Ascending aorta (tissue), 2 donors: ENCODE measurements at regions of chr1 and their contacts with region 1.

Region 1: DNA sequence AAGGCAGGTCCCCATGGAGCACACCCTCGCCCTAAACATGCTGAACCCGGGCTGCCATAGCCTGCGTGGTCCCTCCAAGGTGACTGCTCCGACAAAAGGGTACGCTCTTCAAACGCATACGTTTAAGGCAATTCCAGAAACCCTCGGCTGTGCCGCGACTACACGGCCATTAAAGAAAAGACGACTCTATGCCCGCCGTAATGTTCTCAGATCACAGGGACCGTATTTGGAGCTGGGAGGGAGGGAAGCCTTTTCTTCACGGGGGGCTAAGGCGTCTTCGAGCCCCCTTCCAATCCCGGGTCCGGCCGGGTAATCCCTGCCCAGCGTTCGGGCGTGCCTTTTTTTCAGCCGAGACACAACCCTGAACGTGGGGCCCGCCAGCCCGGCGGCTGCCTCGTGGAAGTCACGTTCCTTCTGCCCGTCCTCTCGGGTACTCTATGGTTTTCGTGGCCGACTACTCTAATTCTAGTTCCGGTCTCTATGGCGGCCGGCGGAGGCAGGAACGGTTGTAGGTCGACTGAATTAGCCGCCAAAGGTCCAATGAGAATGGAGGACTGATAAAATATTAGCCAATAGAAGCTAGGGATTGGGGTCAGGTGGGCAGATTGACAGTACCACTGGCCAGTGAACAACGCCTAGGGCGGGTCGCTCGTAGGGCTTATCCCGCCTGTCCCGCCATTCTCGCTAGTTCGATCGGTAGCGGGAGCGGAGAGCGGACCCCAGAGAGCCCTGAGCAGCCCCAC is at the start of gene YBX1:
- DNase-seq: peak; percentile 93 to 98
- H3K4me3 ChIP-seq: peak within 1 kb of the TSS; percentile 96
- H3K27ac ChIP-seq: peak within 1 kb of the TSS; percentile 84 to 95
- H3K4me1 ChIP-seq: peaks cover 9 to 40% of the 10 kb centered on the region in 2 donors
- H3K27me3 ChIP-seq: no peaks in the 10 kb centered on the region
- CTCF ChIP-seq: no peak
- total RNA-seq, gene YBX1: 356 TPM

Region 2: DNA sequence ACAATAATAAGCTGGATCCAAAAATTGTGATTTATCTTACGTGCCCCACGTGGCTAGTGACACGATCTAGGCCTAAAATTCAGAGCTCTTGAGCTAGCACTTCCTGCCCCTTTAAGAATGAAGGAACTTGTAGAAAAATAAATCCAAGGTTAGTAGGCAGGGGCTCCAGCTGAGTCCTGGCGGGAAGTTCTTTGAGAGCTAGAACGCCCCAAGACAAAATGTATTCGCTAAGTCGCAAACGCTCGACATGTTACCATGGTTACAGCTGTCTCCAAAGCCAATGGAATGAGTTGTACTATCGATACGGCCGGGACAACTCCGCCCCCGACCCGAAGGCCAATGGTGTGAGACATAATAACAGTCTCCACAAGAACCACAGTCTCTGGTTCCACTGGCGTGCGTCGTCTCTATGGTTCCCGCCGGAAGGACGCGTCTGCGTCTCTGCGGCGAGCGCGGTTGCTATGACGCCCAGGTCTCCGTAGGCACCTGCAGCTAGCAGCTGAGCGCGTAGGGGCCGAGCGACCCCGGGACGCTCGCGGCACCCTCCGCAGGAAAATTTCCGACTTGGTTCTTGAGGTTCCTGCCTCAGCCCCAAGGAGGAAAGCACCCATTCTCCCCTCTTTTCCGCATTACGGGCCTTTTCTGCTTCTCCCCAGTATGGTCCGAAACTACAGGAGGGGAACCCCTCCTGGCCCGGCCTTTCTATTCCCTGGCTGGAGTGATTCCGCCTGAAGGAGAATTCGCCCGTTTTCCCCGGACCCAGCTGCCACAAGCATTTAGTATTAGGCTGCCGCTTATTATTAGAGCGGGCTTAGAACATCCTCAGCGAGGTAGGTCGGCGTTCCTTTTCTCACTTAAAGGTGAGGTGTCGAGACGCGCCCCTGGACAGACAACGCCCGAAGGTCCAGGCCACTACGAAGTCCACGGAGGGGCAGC is 218.8 kb before region 1 on chr1 and contains the start of gene CCDC30:
- intact Hi-C with region 1: loop called (anchors 2 kb)
- DNase-seq: peak; percentile 94 to 98
- H3K4me3 ChIP-seq: peak within 1 kb of the TSS; percentile 77
- H3K27ac ChIP-seq: peak within 1 kb of the TSS in 1 of 2 donors; percentile 23
- H3K4me1 ChIP-seq: no peaks in the 10 kb centered on the region
- H3K27me3 ChIP-seq: no peaks in the 10 kb centered on the region
- CTCF ChIP-seq: no peak
- total RNA-seq, gene CCDC30: not detected

Region 3: DNA sequence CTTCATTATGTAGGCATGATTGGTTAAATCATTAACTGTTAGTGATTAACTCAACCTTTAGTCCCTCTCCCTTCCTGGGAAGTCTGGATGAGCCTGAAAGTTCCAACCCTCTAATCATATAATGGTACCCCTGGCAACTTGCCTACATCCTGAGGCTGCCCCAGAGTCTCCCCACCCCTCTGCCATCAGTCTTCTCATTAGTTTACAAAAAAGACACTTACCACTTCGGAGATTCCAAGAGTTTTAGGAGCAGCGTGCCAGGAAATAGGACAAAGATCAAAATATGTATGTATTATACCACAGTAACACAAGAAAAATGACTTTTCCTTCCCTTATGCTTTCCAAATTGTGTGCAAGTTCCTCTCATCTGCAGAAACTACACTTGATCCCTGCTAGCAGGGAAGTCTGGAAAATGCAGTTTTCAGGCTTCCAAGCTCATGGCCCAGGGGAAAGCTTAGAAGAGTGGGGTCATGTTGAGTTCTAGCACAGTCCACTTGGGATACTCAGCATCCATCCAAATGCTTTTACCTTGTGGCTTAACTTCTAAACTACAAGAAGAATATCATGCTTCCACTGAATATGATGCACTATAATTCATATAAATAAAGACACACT is 88.3 kb before region 1 on chr1:
- intact Hi-C with region 1: no loop called
- DNase-seq: no peak
- H3K4me3 ChIP-seq: no peak overlapping the region
- H3K27ac ChIP-seq: no peak overlapping the region
- H3K4me1 ChIP-seq: no peaks in the 10 kb centered on the region
- H3K27me3 ChIP-seq: no peaks in the 10 kb centered on the region
- CTCF ChIP-seq: no peak

Region 4: GRCh38 chr1:42736150-42736850 is 54.4 kb after region 1 on chr1:
- intact Hi-C with region 1: no loop called
- DNase-seq: no peak
- H3K4me3 ChIP-seq: no peak overlapping the region
- H3K27ac ChIP-seq: no peak overlapping the region
- H3K4me1 ChIP-seq: no peaks in the 10 kb centered on the region
- H3K27me3 ChIP-seq: no peaks in the 10 kb centered on the region
- CTCF ChIP-seq: no peak

Region 5: DNA sequence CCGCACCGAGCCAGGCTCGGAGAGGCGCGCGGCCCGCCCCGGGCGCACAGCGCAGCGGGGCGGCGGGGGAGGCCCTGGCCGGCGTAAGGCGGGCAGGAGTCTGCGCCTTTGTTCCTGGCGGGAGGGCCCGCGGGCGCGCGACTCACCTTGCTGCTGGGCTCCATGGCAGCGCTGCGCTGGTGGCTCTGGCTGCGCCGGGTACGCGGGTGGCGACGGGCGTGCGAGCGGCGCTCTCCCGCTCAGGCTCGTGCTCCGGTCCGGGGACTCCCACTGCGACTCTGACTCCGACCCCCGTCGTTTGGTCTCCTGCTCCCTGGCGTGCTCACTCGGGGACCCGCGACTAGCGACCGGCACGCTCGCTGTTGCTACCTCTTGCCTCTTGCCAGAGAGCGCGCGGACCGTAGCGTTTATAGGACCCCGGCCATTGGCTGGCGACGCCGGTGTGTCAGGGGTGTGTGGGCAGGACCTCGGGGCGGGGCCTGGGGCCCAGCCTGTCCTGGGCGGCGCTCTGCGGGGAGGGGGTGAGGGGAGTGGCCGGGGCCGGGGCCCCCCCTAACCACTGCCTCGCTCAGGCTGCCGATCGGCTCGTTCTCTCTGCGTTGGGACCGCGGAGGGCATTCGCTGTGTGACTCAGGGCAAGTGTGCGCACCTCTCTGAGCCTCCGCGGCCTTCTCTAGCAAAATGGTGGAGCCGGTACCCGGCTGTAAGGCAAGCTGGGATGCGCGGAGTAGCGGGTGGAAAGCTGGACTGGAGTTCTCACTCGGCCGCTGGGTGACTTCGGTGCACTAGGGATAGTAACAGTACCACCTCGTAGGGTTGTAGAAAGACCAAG is 276.8 kb after region 1 on chr1 and contains the start of gene SLC2A1:
- intact Hi-C with region 1: loop called (anchors 5 kb)
- DNase-seq: peak; percentile 88 to 97
- H3K4me3 ChIP-seq: peak within 1 kb of the TSS; percentile 94 to 96
- H3K27ac ChIP-seq: peak within 1 kb of the TSS; percentile 93 to 97
- H3K4me1 ChIP-seq: peaks cover 13 to 34% of the 10 kb centered on the region in 2 donors
- H3K27me3 ChIP-seq: no peaks in the 10 kb centered on the region
- CTCF ChIP-seq: peak in 1 of 3 experiments; percentile 3
- total RNA-seq, gene SLC2A1: 15.5 TPM

Region 6: GRCh38 chr1:43171876-43172526 is 490.1 kb after region 1 on chr1 and contains the starts of genes CFAP57 and EBNA1BP2:
- intact Hi-C with region 1: loop called (anchors 2 kb)
- DNase-seq: peak; percentile 76 to 96
- H3K4me3 ChIP-seq: peak within 1 kb of the TSS; percentile 69 to 92
- H3K27ac ChIP-seq: peak within 1 kb of the TSS; percentile 46 to 51
- H3K4me1 ChIP-seq: peaks cover 6 to 9% of the 10 kb centered on the region in 2 donors
- H3K27me3 ChIP-seq: no peaks in the 10 kb centered on the region
- CTCF ChIP-seq: no peak
- total RNA-seq, gene CFAP57: not detected
- total RNA-seq, gene EBNA1BP2: 22.1 TPM